ENCODE measurements at regions of chrX and their contacts with region 1.

Region 1: GRCh38 chrX:44872817-44873414 is at the start of gene KDM6A:
- DNase-seq: peak; percentile 80 to 88
- H3K4me3 ChIP-seq: peak within 1 kb of the TSS; percentile 62
- H3K27ac ChIP-seq: peak within 1 kb of the TSS; percentile 73
- H3K4me1 ChIP-seq: peaks cover 7% of the 10 kb centered on the region; the same call in 1 of the 2 replicates
- H3K27me3 ChIP-seq: no peaks in the 10 kb centered on the region
- CTCF ChIP-seq: no peak
- total RNA-seq, gene KDM6A: 12.2 and 20.5 TPM in 2 replicates

Region 2: GRCh38 chrX:44431206-44431605 is 441.7 kb before region 1 on chrX:
- CTCF ChIA-PET with region 1: no interaction called
- POLR2A ChIA-PET with region 1: interaction called, 13 read pairs
- intact Hi-C with region 1: no loop called
- DNase-seq: peak in 1 of 2 experiments; percentile 64
- H3K4me3 ChIP-seq: no peak overlapping the region
- H3K27ac ChIP-seq: no peak overlapping the region
- H3K4me1 ChIP-seq: no peaks in the 10 kb centered on the region; the same call in 1 of the 2 replicates
- H3K27me3 ChIP-seq: no peaks in the 10 kb centered on the region
- CTCF ChIP-seq: no peak

Region 3: GRCh38 chrX:44848231-44848630 is 24.7 kb before region 1 on chrX:
- CTCF ChIA-PET with region 1: no interaction called
- POLR2A ChIA-PET with region 1: interaction called, 12 read pairs
- intact Hi-C with region 1: no loop called
- DNase-seq: no peak
- H3K4me3 ChIP-seq: no peak overlapping the region
- H3K27ac ChIP-seq: no peak overlapping the region
- H3K4me1 ChIP-seq: no peaks in the 10 kb centered on the region; the same call in 1 of the 2 replicates
- H3K27me3 ChIP-seq: no peaks in the 10 kb centered on the region
- CTCF ChIP-seq: no peak

Region 4: GRCh38 chrX:45070116-45071007 is 197.4 kb after region 1 on chrX:
- CTCF ChIA-PET with region 1: no interaction called
- POLR2A ChIA-PET with region 1: no interaction called
- intact Hi-C with region 1: loop called (anchors 2 kb)
- DNase-seq: no peak
- H3K4me3 ChIP-seq: no peak overlapping the region
- H3K27ac ChIP-seq: no peak overlapping the region
- H3K4me1 ChIP-seq: no peaks in the 10 kb centered on the region
- H3K27me3 ChIP-seq: no peaks in the 10 kb centered on the region
- CTCF ChIP-seq: peak; percentile 54